Heart right ventricle (tissue), 16 donors: ENCODE measurements at regions of chr7 and their contacts with region 1.

Region 1: GRCh38 chr7:131336956-131337355 is 9.3 kb downstream of the MKLN1 start:
- DNase-seq: no peak
- ATAC-seq: no peak
- H3K4me3 ChIP-seq: no peak overlapping the region
- H3K27ac ChIP-seq: no peak overlapping the region
- H3K4me1 ChIP-seq: peaks cover 0 to 53% (median 19%) of the 10 kb centered on the region in 9 donors
- H3K27me3 ChIP-seq: no peaks in the 10 kb centered on the region
- CTCF ChIP-seq: no peak

Region 2: DNA sequence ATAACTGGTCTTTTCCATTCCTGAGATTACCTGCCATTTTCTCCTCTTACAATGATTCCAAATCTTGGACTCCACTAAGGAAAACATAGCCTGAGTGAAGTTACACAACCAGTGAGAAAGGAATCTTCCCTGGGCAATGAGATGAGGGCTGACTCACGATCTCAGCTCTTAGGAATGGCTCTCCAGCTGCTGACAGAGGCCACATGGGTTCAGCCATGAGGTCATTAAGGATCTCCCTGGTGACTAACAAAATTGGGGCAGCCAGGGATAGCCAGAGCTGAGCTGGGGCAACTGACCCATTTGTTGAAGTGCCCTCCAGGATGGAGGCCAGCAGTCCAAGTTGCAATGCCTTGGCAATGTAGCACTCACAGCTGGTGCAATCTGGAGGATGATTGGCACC is 88.0 kb before region 1 on chr7:
- intact Hi-C with region 1: no loop called
- DNase-seq: peak; percentile 27 to 48
- ATAC-seq: peak; percentile 83 to 98 (median 92)
- H3K4me3 ChIP-seq: no peak overlapping the region
- H3K27ac ChIP-seq: peak overlapping the region in 2 of 10 donors; percentile 4 to 47
- H3K4me1 ChIP-seq: peaks cover 0 to 16% (median 0%) of the 10 kb centered on the region in 9 donors
- H3K27me3 ChIP-seq: no peaks in the 10 kb centered on the region
- CTCF ChIP-seq: no peak

Region 3: DNA sequence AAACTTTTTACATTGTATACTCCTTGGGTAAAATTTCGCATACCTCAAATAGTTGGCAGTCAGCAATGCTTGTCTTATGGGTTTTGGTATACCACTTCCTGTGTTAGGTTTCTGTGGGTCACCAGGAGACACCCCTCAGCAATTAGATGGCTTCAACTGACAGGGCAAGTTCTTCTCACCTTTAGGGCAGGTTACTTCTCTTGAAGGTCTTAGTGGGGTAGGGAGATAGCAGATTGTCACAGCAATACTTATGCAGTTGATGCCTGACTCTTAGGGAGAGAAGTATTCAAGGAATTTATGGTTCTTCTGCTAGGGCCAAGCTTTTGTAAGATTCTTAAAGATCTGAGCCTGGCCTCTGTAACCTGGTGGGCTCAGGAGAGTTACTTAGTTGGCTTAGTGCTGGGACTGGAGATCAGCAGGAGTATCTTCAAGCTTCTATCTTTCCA is 33.6 kb after region 1 on chr7:
- intact Hi-C with region 1: loop called in 1 of 10 experiments (anchors 5 kb)
- DNase-seq: no peak
- ATAC-seq: peak in 1 of 8 donors; percentile 16
- H3K4me3 ChIP-seq: no peak overlapping the region
- H3K27ac ChIP-seq: no peak overlapping the region
- H3K4me1 ChIP-seq: peaks cover 0 to 96% (median 73%) of the 10 kb centered on the region in 9 donors
- H3K27me3 ChIP-seq: no peaks in the 10 kb centered on the region
- CTCF ChIP-seq: no peak